GM18951 (cell line): ENCODE measurements at regions of chr3 and their contacts with region 1.

Region 1: DNA sequence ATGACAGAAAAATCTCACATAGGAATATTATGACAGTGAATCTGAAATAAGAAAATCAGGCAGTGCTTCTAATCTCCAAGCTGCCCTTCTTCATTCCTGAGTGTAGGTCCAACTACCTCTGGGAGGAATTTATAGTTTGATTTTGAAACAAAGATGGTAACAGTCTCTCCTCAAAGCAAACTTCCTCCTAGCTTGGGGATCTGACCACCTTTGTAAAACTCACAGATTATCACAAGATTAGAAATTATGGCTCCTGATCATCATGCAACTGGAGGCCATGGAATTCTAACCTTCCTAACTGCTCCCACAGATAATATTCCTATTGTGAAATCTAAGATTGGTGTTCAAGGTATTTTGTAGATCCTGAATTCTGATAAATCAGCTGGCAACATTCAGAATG is 7.4 kb downstream of the OR5H14 start:
- POLR2A ChIP-seq: no peak

Region 2: DNA sequence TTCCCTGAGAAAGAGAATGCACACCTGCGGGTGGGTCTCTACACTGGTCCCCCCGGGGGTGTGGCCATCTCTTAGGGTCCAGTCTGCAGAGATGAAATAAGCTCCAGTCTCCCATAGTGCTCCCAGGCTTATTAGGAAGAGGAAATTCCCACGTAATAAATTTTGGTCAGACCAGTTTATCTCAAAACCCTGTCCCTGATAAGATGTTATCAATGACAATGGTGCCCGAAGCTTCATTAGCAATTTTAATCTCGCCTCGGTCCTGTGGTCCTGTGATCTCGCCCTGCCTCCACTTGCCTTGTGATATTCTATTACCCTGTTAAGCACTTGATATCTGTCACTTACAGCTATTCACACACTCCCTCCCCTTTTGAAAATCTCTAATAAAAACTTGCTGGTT is 58.6 kb after region 1 on chr3:
- in situ Hi-C with region 1: loop called (anchors 5 kb)
- POLR2A ChIP-seq: no peak